ENCODE measurements at regions of chr5 and their contacts with region 1.

Region 1: GRCh38 chr5:134411546-134412266 is at the start of gene CDKN2AIPNL:
- DNase-seq: peak; percentile 72
- ATAC-seq: peak; percentile 92
- H3K4me3 ChIP-seq: peak within 1 kb of the TSS; percentile 90 to 95 (median 94)
- H3K27ac ChIP-seq: peak within 1 kb of the TSS; percentile 96
- H3K4me1 ChIP-seq: peaks cover 63% of the 10 kb centered on the region
- H3K27me3 ChIP-seq: no peaks in the 10 kb centered on the region; a peak in 1 of 5 replicates
- CTCF ChIP-seq: peak; percentile 94
- EP300 ChIP-seq: peak in 1 of 2 experiments; percentile 43; a peak in 1 of 4 replicates
- POLR2A ChIP-seq: peak; percentile 85 to 90
- RAD21 ChIP-seq: peak; percentile 90
- total RNA-seq, gene CDKN2AIPNL: 46.5 and 51.2 TPM in 2 replicates

Region 2: GRCh38 chr5:134426361-134426760 is 14.7 kb after region 1 on chr5:
- CTCF ChIA-PET with region 1: no interaction called
- POLR2A ChIA-PET with region 1: interaction called, 10 read pairs
- in situ Hi-C with region 1: no loop called
- intact Hi-C with region 1: no loop called
- DNase-seq: no peak
- ATAC-seq: no peak
- H3K4me3 ChIP-seq: no peak overlapping the region
- H3K27ac ChIP-seq: no peak overlapping the region
- H3K4me1 ChIP-seq: peaks cover 6% of the 10 kb centered on the region; the same call in 1 of the 2 replicates
- H3K27me3 ChIP-seq: peaks cover 0 to 4% of the 10 kb centered on the region in 2 experiments; a peak in 1 of 5 replicates
- CTCF ChIP-seq: no peak
- EP300 ChIP-seq: no peak
- POLR2A ChIP-seq: no peak
- RAD21 ChIP-seq: no peak

Region 3: GRCh38 chr5:134503088-134503946 is 91.6 kb after region 1 on chr5:
- CTCF ChIA-PET with region 1: no interaction called
- POLR2A ChIA-PET with region 1: interaction called, 127 read pairs
- in situ Hi-C with region 1: no loop called
- intact Hi-C with region 1: loop called (anchors 1 kb)
- DNase-seq: peak; percentile 93
- ATAC-seq: peak; percentile 72
- H3K4me3 ChIP-seq: peak overlapping the region; percentile 27 to 62 (median 41)
- H3K27ac ChIP-seq: peak overlapping the region; percentile 89
- H3K4me1 ChIP-seq: peaks cover 71% of the 10 kb centered on the region
- H3K27me3 ChIP-seq: no peaks in the 10 kb centered on the region; a peak in 1 of 5 replicates
- CTCF ChIP-seq: peak; percentile 34
- EP300 ChIP-seq: no peak; a peak in 1 of 4 replicates
- POLR2A ChIP-seq: peak in 1 of 2 experiments; percentile 78; a peak in 2 of 4 replicates
- RAD21 ChIP-seq: peak; percentile 30; the same call in 1 of the 2 replicates

Region 4: DNA sequence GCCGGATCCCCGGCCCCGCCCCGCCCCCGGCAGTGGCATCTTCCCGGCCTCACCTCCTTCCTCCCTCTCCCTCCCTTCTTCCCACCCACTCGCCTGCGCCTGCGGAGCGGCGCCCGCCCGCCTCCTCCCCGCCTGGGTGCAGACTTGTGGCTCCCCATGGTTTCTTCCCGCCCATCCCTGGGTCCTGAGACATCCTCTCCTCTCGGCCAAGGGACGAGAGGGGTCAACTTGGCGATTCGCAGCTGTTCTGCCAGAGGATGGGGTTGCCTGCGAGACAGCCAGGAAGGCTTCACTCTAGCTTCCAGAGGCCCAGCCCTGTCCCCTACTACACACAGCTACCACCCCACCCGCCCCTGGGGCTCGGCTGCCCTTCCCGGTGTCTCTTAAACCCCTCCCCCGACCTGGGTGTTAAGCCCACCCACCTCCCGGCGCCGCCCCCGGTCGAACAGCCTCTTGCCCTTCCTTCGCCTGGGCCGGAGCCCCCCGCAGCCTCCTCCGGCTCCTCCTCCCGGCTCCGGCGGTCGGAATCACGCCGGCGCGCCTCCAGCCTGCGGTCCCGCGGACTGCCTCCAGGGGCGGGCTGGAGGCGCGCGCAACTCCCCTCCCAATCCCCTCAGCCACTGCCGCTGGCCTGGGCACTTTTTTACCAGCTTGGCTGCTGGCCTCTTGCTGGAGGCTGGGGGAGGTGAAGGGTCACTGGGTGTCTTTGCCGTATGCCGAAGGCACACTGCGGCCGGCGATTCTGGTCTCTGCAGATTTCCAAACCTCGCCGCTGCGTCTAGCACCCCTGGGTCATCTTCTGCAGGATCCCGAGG is 115.6 kb after region 1 on chr5:
- CTCF ChIA-PET with region 1: no interaction called
- POLR2A ChIA-PET with region 1: interaction called, 109 read pairs
- in situ Hi-C with region 1: no loop called
- intact Hi-C with region 1: loop called (anchors 1 kb)
- DNase-seq: peak; percentile 66
- ATAC-seq: peak; percentile 74
- H3K4me3 ChIP-seq: peak overlapping the region; percentile 85 to 92 (median 86)
- H3K27ac ChIP-seq: peak overlapping the region; percentile 95
- H3K4me1 ChIP-seq: peaks cover 48% of the 10 kb centered on the region
- H3K27me3 ChIP-seq: no peaks in the 10 kb centered on the region; a peak in 1 of 5 replicates
- CTCF ChIP-seq: peak; percentile 79
- EP300 ChIP-seq: no peak
- POLR2A ChIP-seq: no peak
- RAD21 ChIP-seq: peak; percentile 77

Measured in HepG2 (cell line).